ENCODE measurements at regions of chr6 and their contacts with region 1.

Region 1: DNA sequence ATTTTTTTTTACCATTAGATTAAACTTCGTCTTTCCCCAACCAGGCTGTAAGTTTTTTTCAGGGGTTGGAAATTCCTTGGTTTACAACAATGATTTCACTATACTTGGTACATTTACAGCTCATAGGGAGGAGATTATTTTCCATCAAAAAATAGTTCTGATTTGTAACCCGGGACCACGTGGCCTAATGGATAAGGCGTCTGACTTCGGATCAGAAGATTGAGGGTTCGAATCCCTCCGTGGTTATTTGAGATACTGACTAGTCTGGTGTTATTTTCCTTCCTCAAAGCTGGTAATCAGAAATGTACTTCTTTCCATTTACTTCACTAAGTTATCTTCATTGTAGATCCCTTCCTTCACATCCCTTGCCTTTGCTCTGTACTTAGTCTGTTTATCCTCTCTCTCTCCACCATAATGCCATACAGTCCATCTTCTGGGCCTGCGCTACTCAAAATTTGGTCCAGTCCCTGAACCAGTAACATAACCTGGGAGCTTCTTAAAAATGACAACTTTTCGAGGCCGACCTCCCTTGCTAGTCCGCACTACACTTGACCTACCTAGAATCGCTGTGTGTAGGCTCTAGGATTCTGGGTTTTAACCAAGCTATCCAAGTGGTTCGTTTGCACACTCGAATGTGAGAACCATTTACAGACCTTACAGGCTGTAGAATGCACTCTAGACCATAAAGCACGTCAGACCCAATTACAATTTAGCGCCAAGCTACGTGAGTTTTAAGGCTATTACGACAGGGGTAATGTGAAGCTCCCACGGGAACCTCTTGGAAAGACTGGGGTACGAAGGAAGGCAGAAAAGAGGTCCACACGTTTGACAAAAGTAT is 42.1 kb upstream of the BTN3A2 start:
- DNase-seq: peak; percentile 72 to 87
- H3K4me3 ChIP-seq: peak overlapping the region; percentile 70
- H3K4me3 Mint-ChIP-seq: peak overlapping the region; percentile 57
- H3K27ac Mint-ChIP-seq: peak overlapping the region; percentile 39
- H3K4me1 ChIP-seq: 0 out of 2 replicates have a peak, but pooled peaks cover 7% of the 10 kb centered on the region
- H3K4me1 Mint-ChIP-seq: peaks cover 26% of the 10 kb centered on the region
- H3K27me3 ChIP-seq: no peaks in the 10 kb centered on the region
- H3K27me3 Mint-ChIP-seq: no peaks in the 10 kb centered on the region
- CTCF ChIP-seq: no peak

Region 2: DNA sequence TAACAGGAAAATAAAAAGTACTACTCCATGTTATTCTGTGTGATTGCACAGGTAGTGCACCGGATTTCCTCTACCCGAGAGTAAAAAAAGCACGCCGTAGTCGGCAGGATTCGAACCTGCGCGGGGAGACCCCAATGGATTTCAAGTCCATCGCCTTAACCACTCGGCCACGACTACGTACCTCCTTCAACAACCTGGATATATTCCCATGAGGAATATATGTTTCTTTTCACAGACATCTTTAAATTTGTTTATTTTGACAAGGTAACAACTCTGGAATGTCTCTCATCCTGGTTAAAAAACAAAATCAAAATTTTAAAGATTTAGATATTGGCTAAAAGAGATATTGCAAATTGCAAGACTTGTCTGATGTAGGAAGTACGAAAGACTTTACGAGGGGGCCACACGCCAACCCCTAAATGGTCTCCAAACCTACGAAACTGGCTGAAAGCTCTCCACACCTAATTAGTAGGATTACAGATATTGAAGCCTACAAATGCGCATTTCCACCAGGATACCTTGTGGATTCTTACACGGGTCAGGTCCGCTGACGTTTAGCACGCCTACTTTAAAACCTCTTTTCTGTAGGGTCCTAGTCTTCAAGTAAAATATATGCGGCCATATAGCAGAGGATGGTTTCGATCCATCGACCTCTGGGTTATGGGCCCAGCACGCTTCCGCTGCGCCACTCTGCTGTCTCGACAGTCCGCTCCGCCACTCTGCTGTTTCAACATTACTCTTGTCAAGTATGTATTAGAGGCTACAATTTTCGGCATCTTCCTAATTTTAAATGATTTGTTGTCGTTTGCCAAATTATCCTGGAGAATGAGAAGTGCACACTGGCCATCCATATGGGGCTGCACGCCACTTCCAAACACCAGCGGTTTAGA is 10.1 kb before region 1 on chr6:
- CTCF ChIA-PET with region 1: interaction called, 4 read pairs
- POLR2A ChIA-PET with region 1: no interaction called
- intact Hi-C with region 1: loop called (anchors 1 kb)
- DNase-seq: peak; percentile 84
- H3K4me3 ChIP-seq: peak overlapping the region; percentile 65
- H3K4me3 Mint-ChIP-seq: peak overlapping the region; percentile 90
- H3K27ac Mint-ChIP-seq: peak overlapping the region; percentile 95
- H3K4me1 ChIP-seq: peaks cover 17% of the 10 kb centered on the region
- H3K4me1 Mint-ChIP-seq: peaks cover 39% of the 10 kb centered on the region
- H3K27me3 ChIP-seq: no peaks in the 10 kb centered on the region
- H3K27me3 Mint-ChIP-seq: no peaks in the 10 kb centered on the region
- CTCF ChIP-seq: no peak

Measured in Caco-2 (cell line).